ENCODE measurements at regions of chr14 and their contacts with region 1.

Region 1: DNA sequence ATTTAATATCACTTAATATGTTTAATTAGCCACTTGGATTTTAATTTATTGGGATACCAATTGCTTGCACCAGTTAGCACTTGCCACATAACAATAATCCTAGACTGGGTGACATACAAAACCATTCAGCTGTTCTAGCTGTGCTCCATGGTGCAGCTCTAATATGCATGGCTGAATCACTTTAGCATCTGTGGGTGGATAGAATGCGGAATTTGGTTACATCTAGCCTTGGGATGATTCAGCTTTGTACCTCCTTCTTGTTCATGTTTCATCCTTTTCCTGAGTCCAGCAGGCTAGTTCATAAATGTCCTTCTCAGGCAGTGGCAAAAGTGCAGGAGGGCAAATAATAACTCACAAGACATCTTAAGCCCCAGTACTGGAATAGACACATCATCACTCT is 1263.0 kb downstream of the LRFN5 start:
- DNase-seq: no peak
- ATAC-seq: no peak
- H3K4me3 ChIP-seq: no peak overlapping the region
- H3K27ac ChIP-seq: no peak overlapping the region
- H3K4me1 ChIP-seq: no peaks in the 10 kb centered on the region
- H3K27me3 ChIP-seq: no peaks in the 10 kb centered on the region
- CTCF ChIP-seq: no peak
- EP300 ChIP-seq: no peak
- POLR2A ChIP-seq: no peak
- RAD21 ChIP-seq: no peak

Region 2: DNA sequence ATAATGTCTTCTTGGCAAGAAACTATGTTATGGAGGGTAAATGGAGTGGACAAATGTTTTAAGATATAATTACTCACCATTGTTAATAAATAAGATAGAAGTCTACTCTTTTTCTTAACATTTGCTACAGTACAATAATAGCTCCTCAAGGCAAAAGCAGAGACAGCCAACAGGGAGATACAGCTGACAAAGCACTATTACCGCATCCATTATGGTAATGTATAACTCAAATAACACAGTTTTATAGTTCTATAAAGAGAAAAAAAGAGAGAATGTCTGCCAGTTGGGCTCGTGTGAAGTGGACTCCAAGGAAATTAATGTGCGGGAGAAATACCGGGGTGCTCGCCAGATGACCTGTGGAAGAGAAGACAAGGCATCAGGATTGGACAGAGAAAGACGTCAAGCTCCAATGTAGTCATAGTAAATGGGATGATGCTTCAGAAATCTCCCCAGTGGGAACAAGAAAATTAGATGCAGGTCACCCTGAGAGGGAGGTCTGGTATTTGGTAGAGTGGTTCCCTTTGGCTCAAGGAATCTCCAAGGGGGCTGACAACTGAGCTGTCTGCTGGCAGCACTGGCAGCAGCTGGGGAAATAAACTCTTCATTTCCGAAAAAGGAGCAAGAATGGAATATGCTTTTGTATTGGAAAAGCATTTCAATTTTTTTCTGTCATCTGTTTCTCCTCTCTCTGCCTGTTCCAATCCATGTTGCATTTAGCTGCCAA is 919.1 kb before region 1 on chr14:
- CTCF ChIA-PET with region 1: no interaction called
- POLR2A ChIA-PET with region 1: no interaction called
- in situ Hi-C with region 1: no loop called
- intact Hi-C with region 1: loop called (anchors 10 kb)
- DNase-seq: no peak
- ATAC-seq: no peak
- H3K4me3 ChIP-seq: no peak overlapping the region
- H3K27ac ChIP-seq: no peak overlapping the region
- H3K4me1 ChIP-seq: no peaks in the 10 kb centered on the region
- H3K27me3 ChIP-seq: no peaks in the 10 kb centered on the region
- CTCF ChIP-seq: no peak
- EP300 ChIP-seq: no peak
- POLR2A ChIP-seq: no peak
- RAD21 ChIP-seq: no peak

Region 3: GRCh38 chr14:42884100-42884499 is 14.4 kb after region 1 on chr14:
- CTCF ChIA-PET with region 1: no interaction called
- POLR2A ChIA-PET with region 1: no interaction called
- in situ Hi-C with region 1: no loop called
- intact Hi-C with region 1: no loop called
- DNase-seq: no peak
- ATAC-seq: no peak
- H3K4me3 ChIP-seq: no peak overlapping the region
- H3K27ac ChIP-seq: no peak overlapping the region
- H3K4me1 ChIP-seq: no peaks in the 10 kb centered on the region
- H3K27me3 ChIP-seq: no peaks in the 10 kb centered on the region
- CTCF ChIP-seq: no peak
- EP300 ChIP-seq: no peak
- POLR2A ChIP-seq: no peak
- RAD21 ChIP-seq: no peak

Region 4: GRCh38 chr14:43166163-43166562 is 296.5 kb after region 1 on chr14:
- CTCF ChIA-PET with region 1: no interaction called
- POLR2A ChIA-PET with region 1: no interaction called
- in situ Hi-C with region 1: no loop called
- intact Hi-C with region 1: no loop called
- DNase-seq: no peak
- ATAC-seq: no peak
- H3K4me3 ChIP-seq: no peak overlapping the region
- H3K27ac ChIP-seq: no peak overlapping the region
- H3K4me1 ChIP-seq: no peaks in the 10 kb centered on the region
- H3K27me3 ChIP-seq: no peaks in the 10 kb centered on the region
- CTCF ChIP-seq: no peak
- EP300 ChIP-seq: no peak
- POLR2A ChIP-seq: no peak
- RAD21 ChIP-seq: no peak